Astrocyte of the cerebellum (primary cell): ENCODE measurements at regions of chr12 and their contacts with region 1.

Region 1: GRCh38 chr12:5102261-5102789 is 58.6 kb downstream of the KCNA5 start:
- DNase-seq: no peak
- H3K4me3 ChIP-seq: no peak overlapping the region
- CTCF ChIP-seq: no peak

Region 2: GRCh38 chr12:5155866-5156265 is 53.5 kb after region 1 on chr12:
- in situ Hi-C with region 1: loop called (anchors 5 kb)
- DNase-seq: no peak
- H3K4me3 ChIP-seq: no peak overlapping the region
- CTCF ChIP-seq: no peak